ENCODE measurements at regions of chr12 and their contacts with region 1.

Region 1: GRCh38 chr12:31896514-31897039 is 62.6 kb upstream of the RESF1 start:
- DNase-seq: peak; percentile 96
- H3K4me3 Mint-ChIP-seq: peak overlapping the region; percentile 69
- H3K27ac Mint-ChIP-seq: peak overlapping the region; percentile 96
- H3K4me1 Mint-ChIP-seq: peaks cover 37% of the 10 kb centered on the region
- H3K27me3 Mint-ChIP-seq: no peaks in the 10 kb centered on the region

Region 2: GRCh38 chr12:31325877-31326631 is 570.5 kb before region 1 on chr12 and contains the start of gene SINHCAF:
- intact Hi-C with region 1: loop called (anchors 5 kb)
- DNase-seq: peak; percentile 100
- H3K4me3 Mint-ChIP-seq: peak within 1 kb of the TSS; percentile 99
- H3K27ac Mint-ChIP-seq: peak within 1 kb of the TSS; percentile 100
- H3K4me1 Mint-ChIP-seq: peaks cover 30% of the 10 kb centered on the region
- H3K27me3 Mint-ChIP-seq: peaks cover 12% of the 10 kb centered on the region
- total RNA-seq, gene SINHCAF: 261 and 277 TPM in 2 replicates

Region 3: DNA sequence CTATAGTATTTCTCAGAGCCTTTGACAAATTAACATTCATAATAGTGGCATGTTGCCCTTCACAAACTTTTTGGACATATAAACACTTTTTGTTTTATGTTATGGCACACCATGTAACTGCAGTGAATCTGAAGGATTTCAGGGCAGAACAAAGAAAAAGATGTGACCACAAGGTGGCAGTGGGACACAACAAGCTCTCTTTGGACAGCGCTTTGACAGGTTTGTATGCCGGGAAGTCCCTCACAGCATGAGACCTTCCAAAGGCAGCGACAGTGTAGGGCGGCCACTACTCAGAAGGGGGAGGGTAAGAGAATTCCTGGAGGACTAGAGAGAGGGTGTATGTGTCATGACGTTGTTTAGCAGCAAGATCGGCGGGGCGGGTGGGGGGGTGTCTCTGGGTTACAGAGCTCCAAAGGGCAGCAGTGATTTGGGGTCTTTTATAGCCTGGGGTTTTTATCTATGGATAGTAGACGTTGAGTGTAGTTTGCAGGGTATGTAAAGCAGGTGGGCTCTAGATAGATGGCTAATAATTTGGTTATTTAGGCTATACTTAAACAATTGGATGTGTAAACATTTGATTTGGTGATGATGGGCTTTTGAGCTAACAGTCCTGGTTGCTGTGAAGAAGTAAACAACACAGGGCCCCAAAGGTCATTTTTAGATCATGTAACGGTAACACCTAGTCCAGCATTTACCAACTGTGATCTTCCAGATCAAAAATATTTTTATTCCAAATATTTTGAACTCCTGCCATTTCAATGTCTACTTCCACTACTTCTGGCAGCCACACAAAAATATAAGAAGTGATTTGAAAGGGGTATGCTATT is 214.2 kb before region 1 on chr12:
- intact Hi-C with region 1: loop called (anchors 1 kb)
- DNase-seq: peak; percentile 91
- H3K4me3 Mint-ChIP-seq: no peak overlapping the region
- H3K27ac Mint-ChIP-seq: peak overlapping the region; percentile 54
- H3K4me1 Mint-ChIP-seq: peaks cover 10% of the 10 kb centered on the region
- H3K27me3 Mint-ChIP-seq: no peaks in the 10 kb centered on the region

Region 4: DNA sequence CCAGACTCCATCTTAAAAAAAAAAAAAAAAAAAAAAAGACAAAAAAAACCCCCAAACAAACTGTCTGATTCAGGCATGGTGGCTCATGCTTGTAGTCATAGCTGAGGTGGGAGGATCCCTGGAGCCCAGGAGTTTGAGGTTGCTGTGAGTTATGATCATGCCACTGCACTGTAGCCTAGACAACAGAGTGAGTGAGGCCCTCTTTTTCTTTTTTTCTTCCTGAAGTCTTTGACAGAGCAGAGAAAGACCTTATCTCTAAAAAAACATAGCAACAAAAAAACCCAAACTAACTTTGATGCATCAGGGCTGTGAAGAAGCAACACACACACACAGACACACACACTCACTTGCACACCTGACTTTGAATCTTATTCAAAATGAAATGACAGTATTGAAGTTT is 160.1 kb before region 1 on chr12:
- intact Hi-C with region 1: loop called (anchors 2 kb)
- DNase-seq: peak; percentile 87
- H3K4me3 Mint-ChIP-seq: peak overlapping the region; percentile 14
- H3K27ac Mint-ChIP-seq: peak overlapping the region; percentile 87
- H3K4me1 Mint-ChIP-seq: peaks cover 46% of the 10 kb centered on the region
- H3K27me3 Mint-ChIP-seq: no peaks in the 10 kb centered on the region

Region 5: DNA sequence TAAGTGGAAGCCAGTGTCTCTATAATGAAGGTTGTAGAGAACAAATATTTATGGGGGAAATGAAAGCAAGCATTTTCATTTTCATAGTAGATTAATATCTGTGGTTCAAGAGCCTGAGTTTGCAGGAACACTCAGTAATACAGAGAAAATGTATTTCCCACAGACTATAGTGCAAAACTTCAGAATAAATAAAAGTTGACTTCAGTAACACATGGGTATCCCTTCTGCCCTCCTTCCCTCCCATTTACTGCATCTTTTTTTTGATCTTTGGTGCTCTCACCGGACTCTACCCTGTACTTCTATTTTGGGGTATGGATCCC is 92.4 kb before region 1 on chr12:
- intact Hi-C with region 1: loop called (anchors 2 kb)
- DNase-seq: no peak
- H3K4me3 Mint-ChIP-seq: peak overlapping the region; percentile 30
- H3K27ac Mint-ChIP-seq: no peak overlapping the region
- H3K4me1 Mint-ChIP-seq: peaks cover 32% of the 10 kb centered on the region
- H3K27me3 Mint-ChIP-seq: no peaks in the 10 kb centered on the region

Region 6: GRCh38 chr12:31874961-31875608 is 21.5 kb before region 1 on chr12:
- intact Hi-C with region 1: loop called (anchors 1 kb)
- DNase-seq: peak; percentile 89
- H3K4me3 Mint-ChIP-seq: peak overlapping the region; percentile 68
- H3K27ac Mint-ChIP-seq: peak overlapping the region; percentile 99
- H3K4me1 Mint-ChIP-seq: peaks cover 20% of the 10 kb centered on the region
- H3K27me3 Mint-ChIP-seq: no peaks in the 10 kb centered on the region

Region 7: DNA sequence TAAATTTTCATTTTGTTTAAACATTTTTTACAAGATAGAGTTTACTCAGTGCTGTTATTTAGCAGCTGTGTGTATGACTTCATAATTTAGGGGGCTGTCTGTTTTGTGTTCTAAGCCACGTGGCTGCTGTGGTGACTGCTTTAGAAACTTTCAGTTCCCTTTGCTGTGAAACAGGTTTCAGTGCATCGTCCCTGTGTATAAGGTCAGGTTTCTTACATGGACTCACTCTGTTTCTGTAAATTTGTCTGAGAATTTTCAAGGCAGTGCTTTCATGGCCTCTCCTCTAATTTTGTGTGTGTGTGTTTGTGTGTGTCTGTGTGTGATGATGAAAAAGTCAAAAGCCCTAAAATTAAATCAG is 242.5 kb after region 1 on chr12:
- intact Hi-C with region 1: loop called (anchors 10 kb)
- DNase-seq: peak; percentile 79
- H3K4me3 Mint-ChIP-seq: peak overlapping the region; percentile 70
- H3K27ac Mint-ChIP-seq: peak overlapping the region; percentile 1
- H3K4me1 Mint-ChIP-seq: peaks cover 18% of the 10 kb centered on the region
- H3K27me3 Mint-ChIP-seq: peaks cover 14% of the 10 kb centered on the region